ENCODE measurements at regions of chr4 and their contacts with region 1.

Region 1: GRCh38 chr4:96126204-96126603 is 286.3 kb downstream of the PDHA2 start:
- DNase-seq: no peak
- ATAC-seq: no peak
- H3K4me3 Mint-ChIP-seq: no peak overlapping the region
- H3K27ac Mint-ChIP-seq: no peak overlapping the region
- H3K4me1 Mint-ChIP-seq: no peaks in the 10 kb centered on the region
- H3K27me3 Mint-ChIP-seq: no peaks in the 10 kb centered on the region

Region 2: GRCh38 chr4:96016634-96017299 is 109.4 kb before region 1 on chr4:
- CTCF ChIA-PET with region 1: no interaction called
- POLR2A ChIA-PET with region 1: no interaction called
- intact Hi-C with region 1: no loop called
- DNase-seq: no peak
- ATAC-seq: peak; percentile 47
- H3K4me3 Mint-ChIP-seq: no peak overlapping the region
- H3K27ac Mint-ChIP-seq: no peak overlapping the region
- H3K4me1 Mint-ChIP-seq: no peaks in the 10 kb centered on the region
- H3K27me3 Mint-ChIP-seq: no peaks in the 10 kb centered on the region

Region 3: DNA sequence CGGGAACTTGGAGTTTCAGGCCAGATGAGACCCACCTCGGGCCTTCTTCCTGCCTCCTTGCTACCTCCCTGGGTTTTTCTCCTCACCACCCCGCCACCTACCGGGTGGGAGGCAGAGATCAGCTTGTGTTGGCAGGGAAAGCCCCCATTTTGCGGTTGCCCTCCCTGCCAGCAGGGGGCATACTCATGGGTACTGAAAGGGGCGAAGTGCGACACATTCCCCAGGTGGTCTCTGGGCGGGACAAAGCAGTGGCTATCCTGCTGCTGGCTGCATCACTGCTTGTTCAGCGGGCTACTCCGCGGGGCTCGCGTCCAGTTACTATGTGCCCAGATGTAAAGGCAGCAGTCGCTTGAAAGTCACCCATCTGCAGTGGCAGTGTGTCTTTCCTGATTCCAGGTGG is 44.0 kb after region 1 on chr4:
- CTCF ChIA-PET with region 1: no interaction called
- POLR2A ChIA-PET with region 1: no interaction called
- intact Hi-C with region 1: no loop called
- DNase-seq: peak; percentile 13
- ATAC-seq: no peak
- H3K4me3 Mint-ChIP-seq: no peak overlapping the region
- H3K27ac Mint-ChIP-seq: no peak overlapping the region
- H3K4me1 Mint-ChIP-seq: no peaks in the 10 kb centered on the region
- H3K27me3 Mint-ChIP-seq: no peaks in the 10 kb centered on the region

Region 4: GRCh38 chr4:96183611-96184010 is 57.4 kb after region 1 on chr4:
- CTCF ChIA-PET with region 1: no interaction called
- POLR2A ChIA-PET with region 1: no interaction called
- intact Hi-C with region 1: no loop called
- DNase-seq: no peak
- ATAC-seq: no peak
- H3K4me3 Mint-ChIP-seq: no peak overlapping the region
- H3K27ac Mint-ChIP-seq: no peak overlapping the region
- H3K4me1 Mint-ChIP-seq: no peaks in the 10 kb centered on the region
- H3K27me3 Mint-ChIP-seq: no peaks in the 10 kb centered on the region

Region 5: GRCh38 chr4:96260064-96260682 is 134.0 kb after region 1 on chr4:
- CTCF ChIA-PET with region 1: no interaction called
- POLR2A ChIA-PET with region 1: no interaction called
- intact Hi-C with region 1: no loop called
- DNase-seq: no peak
- ATAC-seq: no peak
- H3K4me3 Mint-ChIP-seq: no peak overlapping the region
- H3K27ac Mint-ChIP-seq: no peak overlapping the region
- H3K4me1 Mint-ChIP-seq: no peaks in the 10 kb centered on the region
- H3K27me3 Mint-ChIP-seq: no peaks in the 10 kb centered on the region

Region 6: GRCh38 chr4:96531836-96532235 is 405.6 kb after region 1 on chr4:
- CTCF ChIA-PET with region 1: no interaction called
- POLR2A ChIA-PET with region 1: interaction called, 12 read pairs
- intact Hi-C with region 1: no loop called
- DNase-seq: no peak
- ATAC-seq: no peak
- H3K4me3 Mint-ChIP-seq: no peak overlapping the region
- H3K27ac Mint-ChIP-seq: no peak overlapping the region
- H3K4me1 Mint-ChIP-seq: no peaks in the 10 kb centered on the region
- H3K27me3 Mint-ChIP-seq: no peaks in the 10 kb centered on the region